ENCODE measurements at regions of chr3 and their contacts with region 1.

Region 1: GRCh38 chr3:38507120-38507519 is 11.0 kb downstream of the EXOG start:
- DNase-seq: peak; percentile 54
- CTCF ChIP-seq: no peak

Region 2: DNA sequence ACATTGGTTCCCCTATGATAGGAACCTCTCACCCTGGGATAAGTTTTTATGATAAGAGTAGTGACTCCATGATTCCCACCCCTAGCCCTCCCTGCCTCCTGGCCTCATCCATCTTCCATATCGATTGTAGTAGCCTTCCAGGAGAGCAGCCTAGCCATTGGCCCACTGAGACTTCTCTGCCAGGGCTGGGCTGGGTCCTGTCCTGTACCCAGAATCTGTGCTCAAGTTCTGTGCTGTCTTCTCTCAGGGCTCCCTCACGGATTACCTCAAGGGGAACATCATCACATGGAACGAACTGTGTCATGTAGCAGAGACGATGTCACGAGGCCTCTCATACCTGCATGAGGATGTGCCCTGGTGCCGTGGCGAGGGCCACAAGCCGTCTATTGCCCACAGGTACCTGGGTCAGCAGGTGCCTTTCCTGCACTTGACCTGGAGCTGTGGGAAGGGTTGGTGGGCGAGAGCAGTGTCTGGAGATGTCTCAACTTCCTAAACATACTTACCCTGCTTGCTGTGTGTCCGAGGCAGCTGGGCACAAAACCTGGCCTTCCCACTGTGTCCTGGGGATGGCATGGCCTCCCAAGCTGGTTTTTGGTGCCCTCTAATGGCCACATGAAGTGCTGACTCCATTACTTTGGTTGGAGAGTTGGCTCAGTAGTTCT is 27.6 kb before region 1 on chr3:
- CTCF ChIA-PET with region 1: interaction called, 10 read pairs
- POLR2A ChIA-PET with region 1: no interaction called
- DNase-seq: peak; percentile 79
- CTCF ChIP-seq: peak; percentile 91

Region 3: DNA sequence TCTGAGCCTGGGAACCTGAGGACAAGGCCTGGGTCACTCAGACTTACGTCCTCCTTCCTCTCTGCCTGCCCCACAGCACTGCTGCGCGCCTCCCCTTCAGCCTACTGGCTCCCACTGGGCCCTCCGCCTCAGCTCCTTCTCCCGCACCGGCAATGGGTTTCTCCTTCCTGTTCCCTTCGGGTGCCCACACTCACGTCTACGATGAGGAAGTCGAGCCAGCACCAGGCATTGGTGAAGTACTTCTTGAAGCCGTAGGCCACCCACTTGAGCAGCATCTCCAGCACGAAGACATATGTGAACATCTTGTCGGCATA is 59.1 kb after region 1 on chr3:
- CTCF ChIA-PET with region 1: no interaction called
- POLR2A ChIA-PET with region 1: no interaction called
- DNase-seq: no peak
- CTCF ChIP-seq: no peak